Left ventricle myocardium inferior (tissue), 1 donor: ENCODE measurements at regions of chr14 and their contacts with region 1.

Region 1: GRCh38 chr14:50109342-50109741 is 7.0 kb downstream of the VCPKMT start:
- DNase-seq: no peak
- H3K4me3 ChIP-seq: no peak overlapping the region
- H3K27ac ChIP-seq: no peak overlapping the region
- H3K4me1 ChIP-seq: peaks cover 9% of the 10 kb centered on the region
- H3K27me3 ChIP-seq: no peaks in the 10 kb centered on the region
- CTCF ChIP-seq: no peak

Region 2: GRCh38 chr14:49867831-49868723 is 241.3 kb before region 1 on chr14:
- intact Hi-C with region 1: loop called (anchors 10 kb)
- DNase-seq: peak; percentile 98
- H3K4me3 ChIP-seq: peak overlapping the region; percentile 74
- H3K27ac ChIP-seq: peak overlapping the region; percentile 94
- H3K4me1 ChIP-seq: peaks cover 37% of the 10 kb centered on the region
- H3K27me3 ChIP-seq: no peaks in the 10 kb centered on the region
- CTCF ChIP-seq: no peak